ENCODE measurements at regions of chr10 and their contacts with region 1.

Region 1: DNA sequence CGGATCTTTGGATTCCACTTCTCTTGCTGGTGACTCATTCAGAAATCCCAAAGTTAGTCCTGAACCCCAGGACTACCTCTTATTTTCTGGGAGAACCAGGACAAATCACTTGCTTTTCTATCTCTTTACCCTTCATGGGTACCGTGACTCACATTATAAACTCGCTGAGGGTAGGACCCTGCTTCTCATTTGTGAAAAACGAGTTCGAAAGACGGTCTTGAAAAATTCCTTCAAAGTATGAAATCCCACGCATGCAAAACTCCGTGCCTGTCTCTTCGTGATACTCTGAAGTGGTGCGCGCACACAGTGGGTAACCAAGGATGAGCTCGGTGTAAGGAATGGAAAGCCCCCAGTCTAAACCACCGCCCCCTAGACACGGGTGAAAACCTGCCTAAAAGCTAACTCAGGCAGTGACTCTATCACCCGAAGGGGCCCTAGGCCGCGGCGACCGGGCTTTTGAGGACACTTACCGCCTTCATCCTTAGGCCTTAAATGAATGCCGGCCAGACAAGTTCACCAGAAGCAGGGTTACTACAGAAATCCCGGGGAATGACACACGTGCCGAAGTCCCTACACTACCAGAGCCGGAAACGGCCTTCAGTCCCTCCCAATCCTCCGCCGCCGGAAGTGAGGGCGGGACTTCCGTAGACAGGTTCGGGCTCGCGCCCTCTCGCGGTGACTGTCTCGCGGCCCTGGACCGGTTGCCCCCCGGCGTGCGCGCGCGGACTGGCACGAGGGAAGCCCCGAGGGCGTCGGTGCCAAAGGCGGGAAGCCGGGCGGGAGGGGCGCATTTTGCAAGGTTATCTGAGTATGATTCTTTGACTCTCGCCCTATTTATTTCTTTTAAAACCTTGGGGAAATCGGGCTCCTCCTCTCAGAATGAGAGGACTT is at the start of gene NOC3L:
- DNase-seq: peak; percentile 97
- total RNA-seq, gene NOC3L: 8.9 TPM

Region 2: DNA sequence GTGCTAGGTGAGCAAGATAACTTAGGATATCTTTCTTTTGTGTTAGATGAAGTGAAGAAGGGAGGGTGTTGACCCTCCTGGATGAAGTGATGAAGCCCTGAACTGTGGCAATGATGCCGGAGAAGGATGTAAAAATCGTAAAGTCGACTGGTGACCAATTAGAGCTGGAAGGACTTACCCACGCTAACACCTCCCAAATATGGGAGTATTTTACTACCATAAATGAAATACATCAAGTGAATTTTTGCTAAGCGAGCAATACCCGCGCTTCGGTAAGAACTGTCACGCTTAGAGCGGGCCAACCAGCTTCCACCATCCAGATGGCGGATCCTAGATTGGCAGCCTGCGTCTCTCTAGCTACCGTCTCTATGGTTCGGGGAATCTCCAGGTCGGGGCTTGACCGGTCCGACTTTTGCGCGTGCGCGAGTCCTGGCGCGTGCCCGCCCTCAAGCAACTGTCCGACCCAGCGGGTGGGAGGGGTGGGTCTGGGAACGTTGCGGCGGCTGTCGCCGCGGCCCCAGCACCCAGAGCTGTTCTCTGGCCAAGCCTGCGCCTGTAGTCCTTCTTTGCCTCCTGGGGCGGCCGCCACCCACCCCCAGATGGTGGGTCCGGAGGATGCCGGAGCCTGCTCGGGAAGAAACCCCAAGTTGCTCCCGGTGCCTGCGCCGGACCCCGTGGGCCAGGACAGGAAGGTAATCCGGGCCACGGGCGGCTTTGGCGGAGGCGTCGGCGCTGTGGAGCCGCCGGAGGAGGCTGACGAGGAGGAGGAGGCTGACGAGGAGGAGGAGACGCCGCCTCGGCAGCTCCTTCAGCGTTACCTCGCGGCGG is 39.6 kb after region 1 on chr10 and contains the start of gene TBC1D12:
- intact Hi-C with region 1: loop called (anchors 1 kb)
- DNase-seq: peak; percentile 96
- total RNA-seq, gene TBC1D12: 6.3 TPM

Region 3: GRCh38 chr10:94443047-94443446 is 80.4 kb after region 1 on chr10:
- intact Hi-C with region 1: loop called (anchors 5 kb)
- DNase-seq: no peak

Measured in cardiac septum (tissue), 1 donor.